ENCODE measurements at regions of chr17 and their contacts with region 1.

Region 1: DNA sequence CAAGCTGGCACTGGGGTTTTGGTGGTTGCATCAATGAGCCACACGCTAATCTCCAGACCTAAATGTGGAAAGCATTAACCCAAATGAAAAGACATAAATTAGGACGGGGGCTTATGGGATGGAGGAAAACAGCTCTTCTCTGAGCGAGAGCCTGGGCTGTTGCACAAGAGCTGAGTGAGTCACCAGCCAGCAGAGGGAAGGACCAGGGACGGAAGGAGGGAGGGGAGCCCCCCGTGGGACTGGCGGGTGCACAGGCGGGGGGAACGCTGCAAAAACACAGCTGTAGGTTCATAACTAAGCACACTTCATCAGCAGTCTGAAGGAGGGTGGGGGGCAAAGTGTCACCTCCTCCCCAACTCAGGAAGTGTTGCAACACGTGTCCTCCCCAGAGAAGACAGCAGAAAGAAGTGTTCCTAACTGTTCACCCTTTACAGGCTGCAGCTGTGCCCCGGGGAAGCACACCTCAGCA is 83.3 kb downstream of the GAS7 start:
- DNase-seq: peak; percentile 70
- ATAC-seq: peak; percentile 85
- H3K4me3 Mint-ChIP-seq: peak overlapping the region; percentile 76
- H3K27ac Mint-ChIP-seq: peak overlapping the region; percentile 96
- H3K4me1 Mint-ChIP-seq: peaks cover 72% of the 10 kb centered on the region
- H3K27me3 Mint-ChIP-seq: no peaks in the 10 kb centered on the region
- CTCF ChIP-seq: no peak

Region 2: DNA sequence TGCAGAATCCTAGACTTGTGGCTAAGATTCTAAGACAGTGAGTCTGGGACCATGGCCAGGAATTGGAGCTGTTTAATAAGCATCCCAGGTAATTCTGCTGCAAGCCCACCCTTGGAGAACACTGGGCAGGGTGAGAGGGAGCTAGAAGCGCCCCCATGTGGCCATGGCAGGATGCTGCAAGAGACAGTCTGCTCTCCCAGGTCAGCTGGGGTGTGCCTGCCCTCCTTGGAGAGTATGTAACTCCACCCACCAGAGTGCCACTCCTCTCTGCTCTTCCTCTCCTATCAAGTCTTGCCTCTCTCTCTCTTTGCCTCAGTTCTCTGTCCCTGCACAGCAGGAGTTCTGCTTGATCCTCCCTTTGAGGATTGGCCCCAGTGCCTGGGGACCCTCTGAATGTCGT is 225.0 kb before region 1 on chr17:
- CTCF ChIA-PET with region 1: no interaction called
- POLR2A ChIA-PET with region 1: no interaction called
- intact Hi-C with region 1: no loop called
- DNase-seq: no peak
- ATAC-seq: no peak
- H3K4me3 Mint-ChIP-seq: no peak overlapping the region
- H3K27ac Mint-ChIP-seq: no peak overlapping the region
- H3K4me1 Mint-ChIP-seq: no peaks in the 10 kb centered on the region
- H3K27me3 Mint-ChIP-seq: peaks cover 6% of the 10 kb centered on the region
- CTCF ChIP-seq: no peak

Region 3: DNA sequence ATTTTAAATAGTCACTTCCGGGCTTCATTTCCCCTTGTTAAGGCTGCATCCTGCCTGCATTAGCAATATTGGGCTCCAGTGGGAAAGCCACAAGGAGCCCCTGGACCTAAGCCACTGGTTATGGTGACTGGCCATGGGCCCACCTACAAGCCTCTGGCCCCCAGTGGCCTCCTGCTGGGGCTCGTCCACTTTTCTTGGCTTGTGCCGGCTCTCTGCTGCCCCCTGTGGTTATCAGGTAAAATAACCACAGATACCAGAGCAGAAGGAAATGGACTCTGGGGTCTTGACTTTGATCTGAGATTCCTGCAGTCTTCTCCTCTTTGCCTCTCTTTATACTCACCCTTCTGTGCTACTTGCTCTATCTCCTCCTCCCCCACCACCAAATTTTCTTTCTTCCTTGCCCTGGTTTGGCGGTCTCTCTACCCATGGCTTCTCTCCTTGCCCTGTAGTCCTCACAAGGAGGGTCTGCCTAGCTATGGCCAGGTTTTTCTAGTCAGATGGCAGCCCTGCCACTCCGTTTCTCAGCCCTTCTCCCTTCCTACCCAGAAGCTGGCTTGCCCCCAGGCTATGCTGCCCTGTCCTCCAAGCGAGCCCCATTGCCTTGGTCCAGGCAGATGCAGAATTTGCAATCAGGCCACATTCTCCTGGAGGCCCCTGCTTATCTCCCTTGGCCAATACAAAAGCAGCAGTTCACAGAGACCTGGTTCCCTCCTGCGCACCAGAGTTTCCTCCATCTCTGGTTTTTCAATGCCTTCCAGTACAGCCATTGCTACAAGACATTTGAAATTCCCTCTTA is 127.1 kb before region 1 on chr17:
- CTCF ChIA-PET with region 1: interaction called, 3 read pairs
- POLR2A ChIA-PET with region 1: interaction called, 3 read pairs
- intact Hi-C with region 1: loop called (anchors 2 kb)
- DNase-seq: no peak
- ATAC-seq: peak; percentile 62
- H3K4me3 Mint-ChIP-seq: no peak overlapping the region
- H3K27ac Mint-ChIP-seq: no peak overlapping the region
- H3K4me1 Mint-ChIP-seq: peaks cover 10% of the 10 kb centered on the region
- H3K27me3 Mint-ChIP-seq: no peaks in the 10 kb centered on the region
- CTCF ChIP-seq: peak; percentile 72

Region 4: GRCh38 chr17:10041916-10042588 is 73.1 kb before region 1 on chr17:
- CTCF ChIA-PET with region 1: no interaction called
- POLR2A ChIA-PET with region 1: interaction called, 10 read pairs
- intact Hi-C with region 1: loop called (anchors 1 kb)
- DNase-seq: no peak
- ATAC-seq: peak; percentile 72
- H3K4me3 Mint-ChIP-seq: peak overlapping the region; percentile 30
- H3K27ac Mint-ChIP-seq: peak overlapping the region; percentile 84
- H3K4me1 Mint-ChIP-seq: peaks cover 55% of the 10 kb centered on the region
- H3K27me3 Mint-ChIP-seq: no peaks in the 10 kb centered on the region
- CTCF ChIP-seq: no peak

Region 5: DNA sequence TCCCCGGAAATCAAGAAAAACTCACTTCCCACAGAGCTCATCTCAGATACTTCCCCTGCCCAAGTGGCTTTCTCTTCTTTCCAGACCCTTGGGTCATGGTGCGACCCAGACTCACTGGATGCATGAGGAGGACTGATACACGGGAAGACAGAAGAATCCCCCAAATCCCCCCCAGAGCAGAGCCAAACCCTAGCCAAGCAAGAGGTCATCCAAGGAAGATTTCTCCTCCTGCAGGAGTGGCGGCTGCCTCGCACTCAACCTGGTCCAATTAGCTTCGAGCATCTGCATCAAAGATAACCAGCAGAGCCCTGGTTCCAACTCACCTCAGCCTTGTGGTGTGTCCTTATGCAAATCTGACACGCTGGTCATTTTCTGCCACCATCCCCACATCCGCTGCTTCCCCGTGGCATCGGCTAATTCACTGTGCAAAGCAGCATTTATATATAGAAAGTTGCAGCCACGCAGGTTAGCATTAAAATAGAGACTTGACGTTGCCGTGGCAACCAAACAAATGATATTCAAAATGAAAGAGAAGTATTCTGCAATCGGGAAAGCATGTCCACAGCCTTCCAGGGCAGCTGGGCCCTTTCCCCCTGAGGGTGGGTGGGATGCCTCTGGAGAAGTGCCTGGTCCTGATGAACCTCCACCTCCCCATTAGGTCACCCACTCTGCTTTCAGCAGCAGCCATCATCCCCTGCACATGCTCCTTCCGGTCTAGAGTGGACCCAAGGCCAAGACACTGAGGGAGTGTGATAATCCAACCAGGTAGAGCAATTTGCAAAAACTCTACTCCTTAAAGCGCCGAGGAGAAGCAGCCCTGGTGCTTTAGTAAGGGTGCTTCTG is 55.5 kb before region 1 on chr17:
- CTCF ChIA-PET with region 1: no interaction called
- POLR2A ChIA-PET with region 1: interaction called, 24 read pairs
- intact Hi-C with region 1: loop called (anchors 1 kb)
- DNase-seq: no peak
- ATAC-seq: peak; percentile 32
- H3K4me3 Mint-ChIP-seq: peak overlapping the region; percentile 20
- H3K27ac Mint-ChIP-seq: peak overlapping the region; percentile 77
- H3K4me1 Mint-ChIP-seq: peaks cover 58% of the 10 kb centered on the region
- H3K27me3 Mint-ChIP-seq: no peaks in the 10 kb centered on the region
- CTCF ChIP-seq: no peak

Region 6: DNA sequence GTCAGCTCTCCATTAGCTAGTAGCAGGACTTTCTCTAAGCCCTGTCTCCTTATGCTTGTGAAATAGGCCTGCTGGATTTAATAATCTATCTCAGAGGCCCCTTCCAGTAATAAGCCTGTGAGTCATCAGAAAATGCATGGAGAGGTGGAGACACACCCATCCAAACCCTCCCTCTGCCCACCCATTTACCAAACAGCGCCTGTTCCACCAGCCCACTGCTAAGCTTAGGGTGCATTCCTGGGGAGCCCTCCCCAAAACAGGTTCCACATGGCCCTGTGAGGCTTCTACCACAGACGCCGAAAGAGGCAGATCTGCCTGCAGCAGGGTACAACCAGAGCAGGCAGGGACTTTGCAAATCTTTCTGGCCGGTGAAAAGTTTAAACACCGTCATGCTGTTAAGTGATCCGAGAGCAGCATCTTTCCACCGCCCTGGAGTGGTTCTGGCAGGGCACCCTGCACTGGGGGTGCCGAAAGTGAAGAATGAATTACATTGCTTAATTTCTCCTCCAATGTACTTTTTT is 16.0 kb before region 1 on chr17:
- CTCF ChIA-PET with region 1: no interaction called
- POLR2A ChIA-PET with region 1: no interaction called
- intact Hi-C with region 1: no loop called
- DNase-seq: no peak
- ATAC-seq: no peak
- H3K4me3 Mint-ChIP-seq: no peak overlapping the region
- H3K27ac Mint-ChIP-seq: no peak overlapping the region
- H3K4me1 Mint-ChIP-seq: no peaks in the 10 kb centered on the region
- H3K27me3 Mint-ChIP-seq: no peaks in the 10 kb centered on the region
- CTCF ChIP-seq: no peak

Region 7: GRCh38 chr17:10172241-10172741 is 57.2 kb after region 1 on chr17:
- CTCF ChIA-PET with region 1: no interaction called
- POLR2A ChIA-PET with region 1: interaction called, 3 read pairs
- intact Hi-C with region 1: loop called (anchors 10 kb)
- DNase-seq: peak; percentile 25
- ATAC-seq: peak; percentile 91
- H3K4me3 Mint-ChIP-seq: peak overlapping the region; percentile 32
- H3K27ac Mint-ChIP-seq: peak overlapping the region; percentile 54
- H3K4me1 Mint-ChIP-seq: peaks cover 30% of the 10 kb centered on the region
- H3K27me3 Mint-ChIP-seq: no peaks in the 10 kb centered on the region
- CTCF ChIP-seq: no peak

Region 8: DNA sequence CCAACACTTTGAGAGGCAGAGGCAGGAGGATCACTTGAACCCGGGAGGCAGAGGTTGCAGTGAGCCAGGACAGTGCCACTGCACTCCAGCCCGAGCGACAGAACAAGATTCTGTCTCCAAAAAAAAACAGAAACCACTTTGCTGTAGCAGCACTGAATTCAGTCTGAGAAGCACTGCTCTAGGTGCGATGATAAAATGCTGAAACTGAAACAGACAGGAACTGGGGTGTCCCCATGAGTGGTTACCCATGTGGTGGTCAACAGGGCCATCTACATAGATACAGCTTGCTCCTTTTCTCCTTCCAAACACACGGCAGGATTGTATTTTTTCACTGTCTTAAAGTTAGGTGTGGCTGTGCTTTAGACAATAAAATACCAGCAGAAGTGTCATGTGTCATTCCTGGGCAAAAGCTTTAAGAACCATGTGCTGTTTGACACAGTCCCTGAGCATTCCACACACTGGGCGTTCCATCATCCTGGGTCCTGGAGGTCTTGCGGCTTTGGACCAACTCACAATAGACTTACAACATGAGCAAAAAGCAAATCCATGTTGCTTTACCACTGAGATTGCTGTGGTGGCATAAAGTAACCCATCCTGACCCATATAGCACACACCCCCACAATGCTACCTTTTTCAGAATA is 71.8 kb after region 1 on chr17:
- CTCF ChIA-PET with region 1: no interaction called
- POLR2A ChIA-PET with region 1: no interaction called
- intact Hi-C with region 1: no loop called
- DNase-seq: no peak
- ATAC-seq: no peak
- H3K4me3 Mint-ChIP-seq: no peak overlapping the region
- H3K27ac Mint-ChIP-seq: no peak overlapping the region
- H3K4me1 Mint-ChIP-seq: no peaks in the 10 kb centered on the region
- H3K27me3 Mint-ChIP-seq: no peaks in the 10 kb centered on the region
- CTCF ChIP-seq: no peak

Region 9: DNA sequence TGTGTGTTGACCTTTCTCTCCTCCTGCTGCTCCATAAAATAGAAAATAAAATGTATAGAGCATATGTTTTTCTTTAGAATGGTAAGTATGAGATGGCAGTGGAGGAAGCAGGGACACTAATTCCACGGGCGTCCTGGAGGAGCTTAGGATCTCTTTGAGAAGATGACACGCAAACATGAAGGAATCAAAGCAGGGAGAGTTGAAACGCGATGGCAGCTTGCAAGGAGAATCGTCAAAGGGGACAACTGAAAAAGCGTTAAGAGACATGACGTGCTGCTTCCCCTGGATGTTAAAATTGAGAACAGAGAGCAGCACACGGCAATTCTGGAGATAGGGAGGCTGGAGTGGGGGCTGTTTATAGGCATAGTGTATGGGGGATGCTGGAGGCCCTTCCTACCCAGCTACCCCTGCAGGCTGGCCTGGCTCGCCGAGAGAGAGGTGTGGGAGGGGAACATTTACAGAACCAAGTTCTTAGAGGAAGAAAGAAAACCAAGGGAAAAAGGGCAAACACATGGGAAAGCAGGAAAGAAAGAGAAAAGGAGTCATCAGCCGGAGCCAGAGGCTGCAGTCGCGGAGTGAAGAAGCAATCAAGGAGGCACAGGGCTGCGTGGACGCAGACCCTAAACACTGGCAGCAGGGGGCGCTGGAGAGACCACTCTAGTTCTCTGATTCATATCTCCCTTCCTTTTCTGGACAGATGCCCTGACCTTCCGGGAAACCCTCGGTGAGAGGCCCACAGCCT is 201.9 kb after region 1 on chr17:
- CTCF ChIA-PET with region 1: no interaction called
- POLR2A ChIA-PET with region 1: no interaction called
- intact Hi-C with region 1: no loop called
- DNase-seq: no peak
- ATAC-seq: no peak
- H3K4me3 Mint-ChIP-seq: no peak overlapping the region
- H3K27ac Mint-ChIP-seq: no peak overlapping the region
- H3K4me1 Mint-ChIP-seq: no peaks in the 10 kb centered on the region
- H3K27me3 Mint-ChIP-seq: peaks cover 3% of the 10 kb centered on the region
- CTCF ChIP-seq: no peak

Measured in activated B cell treated with CpG ODN at 0.5 μM for 24 hours (primary cell).